ENCODE measurements at regions of chr19 and their contacts with region 1.

Region 1: GRCh38 chr19:4139614-4140236 is 13.7 kb upstream of the CREB3L3 start:
- DNase-seq: peak; percentile 63
- H3K4me3 ChIP-seq: no peak overlapping the region
- H3K27ac ChIP-seq: no peak overlapping the region
- H3K4me1 ChIP-seq: no peaks in the 10 kb centered on the region
- H3K27me3 ChIP-seq: peaks cover 0 to under 1% of the 10 kb centered on the region in 2 experiments
- CTCF ChIP-seq: peak; percentile 90
- POLR2A ChIP-seq: no peak

Region 2: GRCh38 chr19:3995627-3996026 is 144.1 kb before region 1 on chr19:
- CTCF ChIA-PET with region 1: interaction called, 10 read pairs
- POLR2A ChIA-PET with region 1: no interaction called
- dilution Hi-C with region 1: no loop called
- intact Hi-C with region 1: no loop called
- DNase-seq: no peak
- H3K4me3 ChIP-seq: no peak overlapping the region
- H3K27ac ChIP-seq: no peak overlapping the region
- H3K4me1 ChIP-seq: no peaks in the 10 kb centered on the region
- H3K27me3 ChIP-seq: no peaks in the 10 kb centered on the region
- CTCF ChIP-seq: no peak
- POLR2A ChIP-seq: no peak

Region 3: GRCh38 chr19:4108767-4109625 is 30.7 kb before region 1 on chr19:
- CTCF ChIA-PET with region 1: interaction called, 10 read pairs
- POLR2A ChIA-PET with region 1: no interaction called
- dilution Hi-C with region 1: no loop called
- intact Hi-C with region 1: no loop called
- DNase-seq: no peak
- H3K4me3 ChIP-seq: no peak overlapping the region
- H3K27ac ChIP-seq: no peak overlapping the region
- H3K4me1 ChIP-seq: no peaks in the 10 kb centered on the region
- H3K27me3 ChIP-seq: no peaks in the 10 kb centered on the region
- CTCF ChIP-seq: no peak
- POLR2A ChIP-seq: no peak

Region 4: DNA sequence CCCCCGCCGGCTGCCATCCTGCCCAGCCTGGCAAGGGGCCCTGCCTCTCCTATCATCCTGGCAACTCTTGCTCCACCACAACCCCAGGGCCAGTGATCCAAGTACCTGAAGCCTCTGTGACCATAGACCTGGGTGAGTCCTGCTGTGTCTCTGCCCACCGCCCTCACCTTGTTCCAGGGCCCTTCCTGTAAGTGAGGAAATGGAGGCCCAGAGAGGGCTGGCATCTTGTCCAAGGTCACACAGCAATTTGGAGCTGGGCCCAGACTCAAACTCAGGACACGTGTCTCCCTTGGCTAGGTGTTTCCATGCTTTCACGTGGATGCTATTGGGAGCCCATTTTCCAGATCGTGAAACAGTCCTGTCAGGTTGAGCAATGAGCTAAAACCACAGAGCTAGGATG is 17.4 kb after region 1 on chr19:
- CTCF ChIA-PET with region 1: interaction called, 51 read pairs
- POLR2A ChIA-PET with region 1: no interaction called
- dilution Hi-C with region 1: no loop called
- intact Hi-C with region 1: no loop called
- DNase-seq: no peak
- H3K4me3 ChIP-seq: no peak overlapping the region
- H3K27ac ChIP-seq: no peak overlapping the region
- H3K4me1 ChIP-seq: no peaks in the 10 kb centered on the region
- H3K27me3 ChIP-seq: no peaks in the 10 kb centered on the region
- CTCF ChIP-seq: no peak
- POLR2A ChIP-seq: no peak

Region 5: GRCh38 chr19:4186087-4186993 is 46.6 kb after region 1 on chr19:
- CTCF ChIA-PET with region 1: interaction called, 21 read pairs
- POLR2A ChIA-PET with region 1: no interaction called
- dilution Hi-C with region 1: no loop called
- intact Hi-C with region 1: no loop called
- DNase-seq: peak; percentile 61
- H3K4me3 ChIP-seq: no peak overlapping the region
- H3K27ac ChIP-seq: no peak overlapping the region
- H3K4me1 ChIP-seq: peaks cover 3% of the 10 kb centered on the region
- H3K27me3 ChIP-seq: no peaks in the 10 kb centered on the region
- CTCF ChIP-seq: peak; percentile 79 to 89
- POLR2A ChIP-seq: no peak